Caco-2 (cell line): ENCODE measurements at regions of chr10 and their contacts with region 1.

Region 1: DNA sequence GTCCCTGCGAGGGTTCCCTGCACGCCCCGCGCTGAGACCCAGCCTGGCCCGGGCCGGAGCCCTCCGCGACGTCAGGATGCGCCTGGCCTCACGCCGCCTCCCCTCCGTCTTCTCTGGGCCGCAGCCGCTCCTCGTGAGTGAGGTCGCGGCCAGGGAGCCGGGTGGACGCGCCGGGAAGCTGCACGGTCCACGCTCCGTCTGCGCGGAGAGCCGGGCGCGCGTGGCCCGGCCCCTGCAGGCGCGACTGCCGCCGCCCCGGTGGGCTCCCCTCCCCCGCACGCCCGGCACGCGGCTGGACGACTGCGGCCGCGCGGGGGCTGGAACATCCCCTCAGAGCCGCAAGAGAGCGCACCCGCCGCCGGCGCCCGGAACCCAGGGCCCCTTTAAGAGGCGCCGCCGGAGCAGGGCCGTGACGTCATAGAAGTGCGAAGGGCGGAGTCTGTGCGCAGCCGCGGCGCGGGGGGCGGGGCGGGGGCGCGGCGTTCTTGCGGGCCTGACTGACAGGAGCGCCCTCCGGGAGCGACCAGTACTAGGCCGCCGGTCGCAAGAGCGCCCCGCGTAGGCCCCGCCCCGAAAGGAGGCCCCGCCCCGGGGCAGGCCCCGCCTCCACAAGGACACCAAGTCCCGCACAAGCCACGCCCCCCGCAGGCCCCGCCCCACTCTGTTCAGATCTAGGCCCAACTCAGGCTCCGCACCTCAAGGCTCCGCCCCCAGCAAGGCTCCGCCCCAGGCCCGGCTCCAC is 445 bp upstream of the INPP5A start:
- DNase-seq: peak; percentile 99 to 100
- H3K4me3 ChIP-seq: peak overlapping the region; percentile 92
- H3K4me3 Mint-ChIP-seq: peak overlapping the region; percentile 87
- H3K27ac Mint-ChIP-seq: peak overlapping the region; percentile 39
- H3K4me1 ChIP-seq: peaks cover 25% of the 10 kb centered on the region
- H3K4me1 Mint-ChIP-seq: peaks cover 28% of the 10 kb centered on the region
- H3K27me3 ChIP-seq: no peaks in the 10 kb centered on the region
- H3K27me3 Mint-ChIP-seq: no peaks in the 10 kb centered on the region
- CTCF ChIP-seq: peak in 1 of 2 experiments; percentile 41

Region 2: DNA sequence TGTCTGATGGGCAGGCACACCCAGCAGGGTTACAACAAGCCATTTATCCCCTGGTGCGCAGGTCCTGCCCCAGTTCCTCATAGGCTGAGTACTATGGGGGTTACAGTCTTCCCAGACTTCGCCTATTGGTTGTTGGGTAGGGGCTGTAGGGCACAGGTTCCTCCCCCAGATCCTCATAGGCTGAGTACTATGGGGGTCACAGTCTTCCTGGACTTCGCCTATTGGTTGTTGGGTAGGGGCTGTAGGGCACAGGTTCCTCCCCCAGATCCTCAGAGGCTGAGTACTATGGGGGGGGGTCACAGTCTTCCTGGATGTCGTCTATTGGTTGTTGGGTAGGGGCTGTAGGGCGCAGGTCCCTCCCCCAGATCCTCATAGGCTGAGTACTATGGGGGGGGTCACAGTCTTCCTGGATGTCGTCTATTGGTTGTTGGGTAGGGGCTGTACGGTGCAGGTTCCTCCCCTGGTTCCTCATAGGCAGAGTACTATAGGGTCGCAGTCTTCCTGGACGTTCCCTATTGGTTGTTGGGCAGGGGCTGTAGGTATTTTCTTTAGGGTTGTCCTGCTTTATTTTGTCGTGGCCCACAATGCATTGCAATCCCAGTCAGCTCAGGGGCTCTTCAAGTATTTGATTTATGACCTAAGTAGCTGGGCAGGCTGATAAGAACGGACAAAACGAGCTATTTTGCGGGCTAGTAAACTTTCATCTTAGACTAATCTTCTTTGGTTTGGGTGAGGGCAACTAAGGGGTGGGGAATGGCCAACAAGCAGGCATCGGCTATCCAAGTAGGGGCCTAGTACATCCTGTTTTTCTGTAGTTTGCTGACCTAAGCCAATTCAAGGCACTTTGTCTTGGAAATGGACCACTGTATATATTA is 201.7 kb before region 1 on chr10:
- CTCF ChIA-PET with region 1: no interaction called
- POLR2A ChIA-PET with region 1: no interaction called
- intact Hi-C with region 1: loop called (anchors 1 kb)
- DNase-seq: peak; percentile 96 to 99
- H3K4me3 ChIP-seq: peak overlapping the region; percentile 39
- H3K4me3 Mint-ChIP-seq: peak overlapping the region; percentile 74
- H3K27ac Mint-ChIP-seq: peak overlapping the region; percentile 82
- H3K4me1 ChIP-seq: peaks cover 12% of the 10 kb centered on the region; the same call in 1 of the 2 replicates
- H3K4me1 Mint-ChIP-seq: peaks cover 20% of the 10 kb centered on the region
- H3K27me3 ChIP-seq: no peaks in the 10 kb centered on the region
- H3K27me3 Mint-ChIP-seq: no peaks in the 10 kb centered on the region
- CTCF ChIP-seq: no peak

Region 3: DNA sequence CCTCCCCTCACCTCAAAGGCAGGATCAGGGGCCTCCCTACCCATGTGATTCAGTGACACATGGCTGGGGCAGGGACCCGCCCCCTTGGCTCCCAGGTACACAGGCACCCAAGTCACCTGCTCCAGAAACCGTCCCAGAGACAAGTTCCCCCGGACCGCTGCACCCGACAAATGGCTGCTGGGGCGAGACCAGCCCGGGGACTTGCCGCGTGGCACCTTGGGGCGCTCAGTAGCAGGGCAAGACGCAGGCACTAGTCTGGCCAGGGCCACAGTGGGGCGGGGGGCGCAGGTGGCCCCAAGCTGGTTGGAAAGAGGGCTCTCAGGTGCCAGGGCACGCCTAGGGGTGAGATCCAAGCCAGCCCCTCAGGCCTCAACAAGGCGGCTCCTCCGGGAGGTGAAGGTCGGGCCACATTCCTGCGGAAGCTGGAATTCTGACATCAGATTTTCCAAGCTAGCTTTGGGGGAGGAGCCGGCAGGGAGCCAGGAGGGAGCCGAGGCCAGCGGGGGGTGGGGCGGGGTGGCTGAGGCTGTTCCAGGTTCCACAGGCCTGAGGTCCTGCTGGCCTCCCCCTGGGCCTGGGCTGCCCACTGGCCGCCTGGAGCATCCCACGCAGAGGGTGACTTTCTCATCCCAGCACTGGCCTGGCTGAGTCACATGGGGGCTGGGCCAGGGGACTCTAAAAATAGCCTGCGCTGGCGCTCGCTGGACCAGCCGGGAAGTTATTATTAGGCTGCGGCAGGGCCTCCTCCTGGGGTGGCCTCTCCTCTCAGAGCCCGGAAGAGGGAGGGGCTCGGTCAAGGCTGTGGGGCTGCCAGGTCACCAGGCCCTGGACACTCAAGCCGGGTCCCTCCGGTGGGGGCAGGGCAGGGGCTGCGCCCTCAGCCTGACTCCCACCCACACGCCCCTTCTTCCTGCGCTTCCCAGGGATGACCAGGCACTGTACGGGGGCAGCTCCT is 20.1 kb before region 1 on chr10:
- CTCF ChIA-PET with region 1: no interaction called
- POLR2A ChIA-PET with region 1: no interaction called
- intact Hi-C with region 1: loop called (anchors 1 kb)
- DNase-seq: peak; percentile 77 to 89
- H3K4me3 ChIP-seq: no peak overlapping the region
- H3K4me3 Mint-ChIP-seq: peak overlapping the region; percentile 29
- H3K27ac Mint-ChIP-seq: peak overlapping the region; percentile 21
- H3K4me1 ChIP-seq: peaks cover 43% of the 10 kb centered on the region
- H3K4me1 Mint-ChIP-seq: no peaks in the 10 kb centered on the region
- H3K27me3 ChIP-seq: no peaks in the 10 kb centered on the region
- H3K27me3 Mint-ChIP-seq: no peaks in the 10 kb centered on the region
- CTCF ChIP-seq: no peak

Region 4: GRCh38 chr10:132575356-132576201 is 38.4 kb after region 1 on chr10:
- CTCF ChIA-PET with region 1: no interaction called
- POLR2A ChIA-PET with region 1: no interaction called
- intact Hi-C with region 1: loop called (anchors 2 kb)
- DNase-seq: peak; percentile 58 to 75
- H3K4me3 ChIP-seq: no peak overlapping the region
- H3K4me3 Mint-ChIP-seq: no peak overlapping the region
- H3K27ac Mint-ChIP-seq: peak overlapping the region; percentile 26
- H3K4me1 ChIP-seq: peaks cover 33% of the 10 kb centered on the region
- H3K4me1 Mint-ChIP-seq: peaks cover 10% of the 10 kb centered on the region
- H3K27me3 ChIP-seq: no peaks in the 10 kb centered on the region
- H3K27me3 Mint-ChIP-seq: no peaks in the 10 kb centered on the region
- CTCF ChIP-seq: no peak

Region 5: DNA sequence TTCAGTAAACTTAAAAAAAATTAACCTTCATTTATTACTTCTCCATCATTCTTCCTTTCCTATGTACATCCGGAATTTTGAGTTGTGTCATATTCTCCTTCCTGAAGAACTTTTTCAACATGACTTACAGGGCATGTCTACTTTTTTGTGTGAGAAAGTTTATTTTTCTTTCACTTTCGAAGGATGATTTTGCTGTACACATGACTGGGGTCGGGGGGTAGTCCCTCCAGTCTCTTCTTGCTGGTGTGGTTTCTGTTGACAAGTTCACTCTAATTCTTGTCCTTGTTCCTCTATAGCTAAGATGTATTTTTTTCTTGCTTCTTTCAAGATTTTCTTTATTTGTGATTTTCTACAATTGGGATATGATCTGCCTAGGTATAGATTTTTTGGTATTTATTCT is 56.2 kb after region 1 on chr10:
- CTCF ChIA-PET with region 1: no interaction called
- POLR2A ChIA-PET with region 1: no interaction called
- intact Hi-C with region 1: loop called (anchors 1 kb)
- DNase-seq: no peak
- H3K4me3 ChIP-seq: no peak overlapping the region
- H3K4me3 Mint-ChIP-seq: peak overlapping the region; percentile 41
- H3K27ac Mint-ChIP-seq: peak overlapping the region; percentile 58
- H3K4me1 ChIP-seq: peaks cover 46% of the 10 kb centered on the region
- H3K4me1 Mint-ChIP-seq: peaks cover 47% of the 10 kb centered on the region
- H3K27me3 ChIP-seq: no peaks in the 10 kb centered on the region
- H3K27me3 Mint-ChIP-seq: no peaks in the 10 kb centered on the region
- CTCF ChIP-seq: no peak

Region 6: DNA sequence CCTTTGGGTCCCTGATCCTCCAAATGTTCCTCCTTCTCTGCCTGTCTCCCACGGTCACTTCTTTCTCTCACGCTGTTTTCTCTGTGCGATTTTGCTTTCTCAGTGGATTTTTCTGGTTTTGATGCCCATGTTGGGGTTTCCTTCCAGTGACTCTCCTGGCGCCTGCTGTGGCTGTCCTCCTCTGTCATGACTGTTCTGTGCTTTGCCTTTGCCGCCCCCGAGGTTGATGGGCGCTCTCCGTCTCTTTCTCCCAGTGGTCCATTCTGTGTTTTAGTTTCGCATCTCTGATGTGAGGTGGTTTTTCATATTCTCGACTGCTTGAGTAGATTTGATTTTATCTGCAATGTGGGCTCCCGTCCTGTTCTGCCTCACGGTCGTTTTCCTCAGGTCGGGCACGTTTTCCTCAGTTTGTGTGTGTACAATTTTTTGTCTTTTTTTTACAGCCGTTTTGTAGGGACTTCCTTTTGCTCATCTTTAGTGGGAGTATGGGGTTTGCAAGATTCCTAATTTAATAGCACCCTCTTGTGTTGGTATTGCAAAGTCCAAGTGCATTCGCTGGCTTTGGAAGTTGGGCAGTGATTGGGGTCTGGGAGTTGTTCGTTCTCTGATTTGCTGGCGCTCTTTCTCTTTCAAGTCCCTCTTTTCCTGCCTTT is 100.5 kb after region 1 on chr10:
- CTCF ChIA-PET with region 1: no interaction called
- POLR2A ChIA-PET with region 1: no interaction called
- intact Hi-C with region 1: loop called (anchors 2 kb)
- DNase-seq: peak in 1 of 2 experiments; percentile 61
- H3K4me3 ChIP-seq: no peak overlapping the region
- H3K4me3 Mint-ChIP-seq: no peak overlapping the region
- H3K27ac Mint-ChIP-seq: no peak overlapping the region
- H3K4me1 ChIP-seq: no peaks in the 10 kb centered on the region
- H3K4me1 Mint-ChIP-seq: peaks cover 9% of the 10 kb centered on the region
- H3K27me3 ChIP-seq: no peaks in the 10 kb centered on the region
- H3K27me3 Mint-ChIP-seq: no peaks in the 10 kb centered on the region
- CTCF ChIP-seq: peak; percentile 57 to 69